ENCODE measurements at regions of chr11 and their contacts with region 1.

Region 1: GRCh38 chr11:74018331-74019005 is 9.6 kb upstream of the UCP3 start:
- DNase-seq: peak; percentile 89 to 93
- ATAC-seq: peak; percentile 92 to 97 (median 95)
- H3K4me3 ChIP-seq: no peak overlapping the region
- H3K27ac ChIP-seq: peak overlapping the region; percentile 51 to 93 (median 89)
- H3K4me1 ChIP-seq: peaks cover 9 to 70% (median 24%) of the 10 kb centered on the region in 9 donors
- H3K27me3 ChIP-seq: no peaks in the 10 kb centered on the region
- CTCF ChIP-seq: no peak

Region 2: DNA sequence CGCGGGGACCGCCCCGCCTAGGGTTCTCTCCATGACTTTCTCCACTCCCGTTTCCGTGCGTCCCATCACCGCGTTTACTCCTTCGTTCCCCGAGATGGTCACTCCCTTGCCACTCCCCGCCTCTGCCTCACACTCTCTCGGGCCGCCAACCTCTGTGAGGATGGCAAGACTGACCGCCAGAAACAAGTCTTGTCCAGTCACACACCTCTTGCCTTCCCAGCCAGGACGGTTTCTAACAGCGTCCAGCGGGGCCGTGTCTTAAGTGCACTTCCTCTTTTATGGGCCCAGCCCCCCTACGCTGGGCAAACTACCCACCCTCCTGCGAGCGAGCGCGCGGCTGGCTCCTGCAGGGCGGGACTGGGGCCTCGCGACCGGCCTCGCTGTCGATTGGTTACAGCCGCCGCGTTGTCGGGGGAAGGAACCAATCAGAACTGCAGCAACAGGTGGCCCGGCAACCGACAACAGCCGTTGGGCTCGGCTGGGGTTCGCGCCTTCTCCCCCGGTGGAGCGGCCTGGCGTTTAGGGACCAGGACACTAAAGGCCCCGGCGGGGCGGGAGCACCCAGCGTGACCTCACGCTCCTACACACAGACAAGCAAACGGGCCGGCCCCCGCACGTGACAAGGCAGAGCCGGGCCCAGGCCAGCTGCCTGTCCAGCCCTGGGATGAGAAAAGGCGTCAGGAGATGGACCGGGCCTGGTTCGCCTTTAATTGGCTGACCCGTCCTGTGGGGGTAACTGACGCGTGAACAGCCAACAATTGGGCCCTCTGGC is 35.3 kb before region 1 on chr11:
- intact Hi-C with region 1: loop called in 5 of 10 experiments (anchors 1 to 10 kb)
- DNase-seq: peak; percentile 93
- ATAC-seq: peak; percentile 92 to 97 (median 96)
- H3K4me3 ChIP-seq: peak overlapping the region; percentile 26 to 88 (median 64)
- H3K27ac ChIP-seq: peak overlapping the region; percentile 55 to 94 (median 81)
- H3K4me1 ChIP-seq: peaks cover 0 to 52% (median 15%) of the 10 kb centered on the region in 9 donors
- H3K27me3 ChIP-seq: no peaks in the 10 kb centered on the region
- CTCF ChIP-seq: no peak